ENCODE measurements at regions of chr1 and their contacts with region 1.

Region 1: DNA sequence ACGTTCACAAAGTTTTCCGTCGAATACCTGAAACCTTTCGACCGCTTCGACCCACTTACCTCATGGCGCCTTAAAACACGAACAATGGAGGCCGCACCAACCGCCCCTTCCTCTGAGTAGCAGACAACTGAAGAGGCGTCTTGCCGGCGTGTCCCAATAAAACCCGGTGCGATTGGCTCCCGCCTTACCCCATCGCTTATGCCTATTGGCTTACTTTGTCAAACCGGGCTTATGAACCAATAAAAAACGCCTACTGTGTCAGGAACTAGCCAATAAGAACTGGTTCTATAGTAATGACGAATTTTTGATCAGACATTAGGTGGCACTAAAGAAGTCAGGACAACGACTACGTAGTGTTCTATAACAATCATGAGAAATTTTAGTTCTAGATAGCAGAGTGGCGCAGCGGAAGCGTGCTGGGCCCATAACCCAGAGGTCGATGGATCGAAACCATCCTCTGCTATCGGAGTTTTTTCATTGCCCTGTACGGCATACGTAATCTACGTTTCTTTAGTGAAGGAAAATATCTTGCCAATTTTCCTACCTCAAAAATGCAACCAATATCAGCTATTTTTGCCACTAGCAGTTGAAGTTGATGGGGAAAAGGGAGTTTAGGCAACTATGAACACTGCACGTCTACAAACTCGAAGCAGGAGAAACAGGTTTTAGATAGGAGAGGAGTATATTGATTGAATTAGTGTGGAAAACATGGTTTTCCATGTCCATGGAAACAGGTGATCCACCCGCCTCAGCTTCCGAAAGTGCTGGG is at the start of gene ILF2:
- DNase-seq: peak; percentile 94 to 100 (median 97)
- ATAC-seq: peak; percentile 87
- H3K4me3 ChIP-seq: peak within 1 kb of the TSS; percentile 84
- H3K4me3 Mint-ChIP-seq: no peak within 1 kb of the TSS
- H3K27ac ChIP-seq: peak within 1 kb of the TSS; percentile 89 to 91
- H3K27ac Mint-ChIP-seq: no peak within 1 kb of the TSS
- H3K4me1 ChIP-seq: peaks cover 36% of the 10 kb centered on the region
- H3K4me1 Mint-ChIP-seq: peaks cover 25% of the 10 kb centered on the region
- H3K27me3 ChIP-seq: no peaks in the 10 kb centered on the region
- H3K27me3 Mint-ChIP-seq: no peaks in the 10 kb centered on the region
- CTCF ChIP-seq: peak; percentile 28
- total RNA-seq, gene ILF2: 140 to 147 TPM

Region 2: GRCh38 chr1:153261281-153262069 is 409.6 kb before region 1 on chr1:
- CTCF ChIA-PET with region 1: no interaction called
- POLR2A ChIA-PET with region 1: no interaction called
- intact Hi-C with region 1: no loop called
- DNase-seq: peak in 13 of 14 experiments; percentile 3 to 66 (median 23)
- ATAC-seq: peak; percentile 54
- H3K4me3 ChIP-seq: peak overlapping the region; percentile 45
- H3K4me3 Mint-ChIP-seq: peak overlapping the region; percentile 72
- H3K27ac ChIP-seq: no peak overlapping the region
- H3K27ac Mint-ChIP-seq: peak overlapping the region; percentile 22
- H3K4me1 ChIP-seq: peaks cover 20% of the 10 kb centered on the region
- H3K4me1 Mint-ChIP-seq: peaks cover 42% of the 10 kb centered on the region
- H3K27me3 ChIP-seq: peaks cover 26 to 42% of the 10 kb centered on the region in 2 experiments
- H3K27me3 Mint-ChIP-seq: peaks cover 46% of the 10 kb centered on the region
- CTCF ChIP-seq: no peak

Region 3: DNA sequence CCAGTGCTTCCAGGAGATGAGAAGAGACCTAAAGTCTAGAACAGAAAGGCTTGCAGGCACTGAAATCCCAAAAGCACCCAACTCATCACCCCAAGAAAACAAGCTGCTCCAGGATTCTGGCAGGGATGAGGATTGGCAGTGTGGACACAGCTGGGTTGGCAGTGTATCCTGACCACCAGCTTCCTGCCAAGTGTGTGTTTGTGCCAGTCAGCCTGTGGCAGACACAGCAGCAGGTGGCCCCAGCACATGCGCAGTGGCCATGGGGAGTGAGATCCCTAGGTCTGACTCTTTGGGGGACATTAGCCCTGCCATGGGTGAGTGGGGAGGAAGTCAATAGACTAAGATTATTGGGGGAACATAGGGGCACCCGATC is 21.2 kb before region 1 on chr1:
- CTCF ChIA-PET with region 1: no interaction called
- POLR2A ChIA-PET with region 1: interaction called, 15 read pairs
- intact Hi-C with region 1: no loop called
- DNase-seq: peak in 3 of 14 experiments; percentile 3 to 32 (median 23)
- ATAC-seq: peak; percentile 20
- H3K4me3 ChIP-seq: no peak overlapping the region
- H3K4me3 Mint-ChIP-seq: peak overlapping the region; percentile 76
- H3K27ac ChIP-seq: peak overlapping the region in 1 of 2 donors; percentile 14
- H3K27ac Mint-ChIP-seq: peak overlapping the region; percentile 76
- H3K4me1 ChIP-seq: peaks cover 37% of the 10 kb centered on the region
- H3K4me1 Mint-ChIP-seq: peaks cover 47% of the 10 kb centered on the region
- H3K27me3 ChIP-seq: no peaks in the 10 kb centered on the region
- H3K27me3 Mint-ChIP-seq: no peaks in the 10 kb centered on the region
- CTCF ChIP-seq: no peak

Region 4: GRCh38 chr1:153658400-153659174 is 12.5 kb before region 1 on chr1 and contains the start of gene SNAPIN:
- CTCF ChIA-PET with region 1: interaction called, 3 read pairs
- POLR2A ChIA-PET with region 1: interaction called, 20 read pairs
- intact Hi-C with region 1: loop called (anchors 1 kb)
- DNase-seq: peak; percentile 78 to 93 (median 87)
- ATAC-seq: peak; percentile 96
- H3K4me3 ChIP-seq: peak within 1 kb of the TSS; percentile 79
- H3K4me3 Mint-ChIP-seq: peak within 1 kb of the TSS; percentile 97
- H3K27ac ChIP-seq: peak within 1 kb of the TSS; percentile 76 to 84
- H3K27ac Mint-ChIP-seq: peak within 1 kb of the TSS; percentile 94
- H3K4me1 ChIP-seq: peaks cover 22% of the 10 kb centered on the region
- H3K4me1 Mint-ChIP-seq: peaks cover 16% of the 10 kb centered on the region
- H3K27me3 ChIP-seq: no peaks in the 10 kb centered on the region
- H3K27me3 Mint-ChIP-seq: no peaks in the 10 kb centered on the region
- CTCF ChIP-seq: no peak
- total RNA-seq, gene SNAPIN: 7.2 to 7.3 TPM

Region 5: GRCh38 chr1:153698932-153699515 is 28.0 kb after region 1 on chr1:
- CTCF ChIA-PET with region 1: no interaction called
- POLR2A ChIA-PET with region 1: no interaction called
- intact Hi-C with region 1: no loop called
- DNase-seq: no peak
- ATAC-seq: no peak
- H3K4me3 ChIP-seq: no peak overlapping the region
- H3K4me3 Mint-ChIP-seq: no peak overlapping the region
- H3K27ac ChIP-seq: no peak overlapping the region
- H3K27ac Mint-ChIP-seq: no peak overlapping the region
- H3K4me1 ChIP-seq: no peaks in the 10 kb centered on the region
- H3K4me1 Mint-ChIP-seq: no peaks in the 10 kb centered on the region
- H3K27me3 ChIP-seq: peaks cover 0 to 2% of the 10 kb centered on the region in 2 experiments
- H3K27me3 Mint-ChIP-seq: peaks cover 5% of the 10 kb centered on the region
- CTCF ChIP-seq: no peak

Region 6: GRCh38 chr1:153727463-153728304 is 56.6 kb after region 1 on chr1 and contains the start of gene INTS3:
- CTCF ChIA-PET with region 1: interaction called, 4 read pairs
- POLR2A ChIA-PET with region 1: interaction called, 20 read pairs
- intact Hi-C with region 1: loop called in 1 of 2 experiments (anchors 2 kb)
- DNase-seq: peak; percentile 95 to 100 (median 99)
- ATAC-seq: peak; percentile 99
- H3K4me3 ChIP-seq: peak within 1 kb of the TSS; percentile 71
- H3K4me3 Mint-ChIP-seq: peak within 1 kb of the TSS; percentile 95
- H3K27ac ChIP-seq: peak within 1 kb of the TSS; percentile 91 to 94
- H3K27ac Mint-ChIP-seq: peak within 1 kb of the TSS; percentile 84
- H3K4me1 ChIP-seq: peaks cover 23% of the 10 kb centered on the region
- H3K4me1 Mint-ChIP-seq: peaks cover 29% of the 10 kb centered on the region
- H3K27me3 ChIP-seq: no peaks in the 10 kb centered on the region
- H3K27me3 Mint-ChIP-seq: no peaks in the 10 kb centered on the region
- CTCF ChIP-seq: no peak
- total RNA-seq, gene INTS3: 24.9 to 27.4 TPM

Region 7: DNA sequence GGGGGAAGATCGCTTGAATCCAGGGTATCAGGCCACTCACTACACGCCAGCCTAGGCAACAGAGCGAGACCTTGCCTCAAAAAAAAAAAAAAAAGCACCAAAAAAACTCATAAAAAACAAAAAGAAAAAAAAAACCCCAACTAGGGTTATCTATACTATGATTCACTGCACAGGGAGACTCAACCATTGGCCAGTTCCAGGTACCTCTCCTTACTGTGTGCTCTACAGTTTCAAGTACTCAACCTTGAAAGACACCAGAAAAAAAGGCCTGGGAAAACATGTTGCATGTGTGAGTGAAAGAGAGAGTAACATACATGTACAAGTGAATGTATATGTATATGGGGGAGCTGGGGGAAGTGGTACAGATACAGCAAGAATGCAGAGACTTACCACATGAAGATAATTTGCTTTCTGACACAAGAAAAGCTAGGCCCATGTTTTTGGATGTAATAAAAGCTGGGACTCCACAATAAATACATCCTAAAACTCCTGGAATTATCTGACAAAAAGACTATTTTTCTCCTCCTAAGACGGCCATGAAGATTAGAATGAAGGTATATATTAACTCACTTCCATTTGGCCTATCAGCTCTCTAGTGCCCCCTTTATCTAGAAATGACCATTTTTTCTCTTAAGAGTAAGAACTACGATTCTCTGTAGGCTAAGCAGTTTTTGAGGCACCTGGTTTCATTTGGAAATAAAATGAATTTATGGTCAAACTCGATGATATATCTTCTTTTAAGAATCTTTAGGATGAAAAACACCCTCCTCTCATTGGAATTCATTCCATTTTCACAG is 156.3 kb after region 1 on chr1:
- CTCF ChIA-PET with region 1: no interaction called
- POLR2A ChIA-PET with region 1: no interaction called
- intact Hi-C with region 1: no loop called
- DNase-seq: no peak
- ATAC-seq: no peak
- H3K4me3 ChIP-seq: no peak overlapping the region
- H3K4me3 Mint-ChIP-seq: no peak overlapping the region
- H3K27ac ChIP-seq: no peak overlapping the region
- H3K27ac Mint-ChIP-seq: no peak overlapping the region
- H3K4me1 ChIP-seq: no peaks in the 10 kb centered on the region
- H3K4me1 Mint-ChIP-seq: peaks cover 4% of the 10 kb centered on the region
- H3K27me3 ChIP-seq: no peaks in the 10 kb centered on the region
- H3K27me3 Mint-ChIP-seq: no peaks in the 10 kb centered on the region
- CTCF ChIP-seq: no peak

Region 8: DNA sequence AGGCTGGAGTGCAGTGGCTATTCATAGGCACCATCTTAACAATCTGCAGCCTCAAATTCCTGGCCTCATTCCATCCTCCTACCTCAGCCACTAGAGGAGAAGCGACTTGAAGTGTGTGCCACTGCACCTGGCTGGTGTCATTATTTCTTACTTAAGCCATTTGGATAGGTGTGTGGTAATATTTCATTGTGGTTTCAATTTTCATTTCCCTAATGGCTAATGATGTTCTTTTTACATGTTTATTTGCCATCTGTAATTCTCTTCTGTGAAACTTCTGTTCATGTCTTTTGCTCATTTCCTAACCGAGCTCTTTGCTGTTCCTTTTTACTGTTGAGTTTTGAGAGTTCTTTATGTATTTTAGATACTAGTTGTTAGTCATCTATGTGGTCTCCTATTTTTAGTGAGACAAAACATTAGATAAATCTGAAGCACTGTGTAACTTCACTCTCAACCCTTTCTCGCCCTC is 171.0 kb after region 1 on chr1:
- CTCF ChIA-PET with region 1: no interaction called
- POLR2A ChIA-PET with region 1: no interaction called
- intact Hi-C with region 1: no loop called
- DNase-seq: no peak
- ATAC-seq: no peak
- H3K4me3 ChIP-seq: no peak overlapping the region
- H3K4me3 Mint-ChIP-seq: no peak overlapping the region
- H3K27ac ChIP-seq: no peak overlapping the region
- H3K27ac Mint-ChIP-seq: peak overlapping the region; percentile 6
- H3K4me1 ChIP-seq: peaks cover 3% of the 10 kb centered on the region
- H3K4me1 Mint-ChIP-seq: peaks cover 28% of the 10 kb centered on the region
- H3K27me3 ChIP-seq: no peaks in the 10 kb centered on the region
- H3K27me3 Mint-ChIP-seq: no peaks in the 10 kb centered on the region
- CTCF ChIP-seq: no peak